ENCODE measurements at regions of chr1 and their contacts with region 1.

Region 1: DNA sequence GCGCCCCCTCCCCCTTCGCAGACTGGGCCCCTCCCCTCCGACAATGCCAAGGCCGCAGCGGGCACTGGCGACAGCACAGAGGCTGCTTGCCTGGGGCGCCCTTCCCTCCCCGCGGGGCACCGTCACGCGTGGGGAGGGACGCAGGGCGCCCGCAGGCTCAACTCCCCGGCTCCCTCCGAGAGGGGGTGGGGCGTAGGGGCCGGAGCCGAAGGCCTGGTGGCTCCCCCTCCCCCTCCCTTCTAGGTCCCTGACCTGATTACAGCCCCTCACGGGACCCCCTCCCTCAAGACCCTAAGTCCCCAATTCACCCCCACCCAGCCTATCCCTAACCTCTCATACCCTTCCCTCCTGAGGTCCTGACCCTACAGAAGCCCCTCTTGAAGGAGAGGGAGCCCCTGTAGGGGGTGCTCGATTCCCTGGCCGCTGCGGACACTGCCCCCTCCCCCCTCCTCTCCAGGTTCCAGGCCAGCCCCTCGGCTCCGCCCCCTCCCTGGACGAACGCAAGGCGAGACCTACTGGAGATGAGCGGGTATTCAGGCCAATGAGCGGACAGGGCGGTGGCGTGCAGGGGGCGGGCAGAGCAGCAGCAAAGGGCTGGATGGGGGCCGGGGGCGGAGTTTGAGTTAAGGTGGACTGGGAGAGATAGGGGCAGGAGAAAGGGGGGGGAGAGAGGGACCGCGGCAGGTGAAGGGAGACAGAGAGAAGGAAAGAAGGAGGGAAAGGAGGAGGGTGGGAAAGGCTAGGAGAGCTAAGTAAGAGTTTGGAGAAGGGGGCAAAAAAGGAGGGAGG is 733 bp upstream of the ZBTB7B start:
- DNase-seq: peak; percentile 100

Region 2: DNA sequence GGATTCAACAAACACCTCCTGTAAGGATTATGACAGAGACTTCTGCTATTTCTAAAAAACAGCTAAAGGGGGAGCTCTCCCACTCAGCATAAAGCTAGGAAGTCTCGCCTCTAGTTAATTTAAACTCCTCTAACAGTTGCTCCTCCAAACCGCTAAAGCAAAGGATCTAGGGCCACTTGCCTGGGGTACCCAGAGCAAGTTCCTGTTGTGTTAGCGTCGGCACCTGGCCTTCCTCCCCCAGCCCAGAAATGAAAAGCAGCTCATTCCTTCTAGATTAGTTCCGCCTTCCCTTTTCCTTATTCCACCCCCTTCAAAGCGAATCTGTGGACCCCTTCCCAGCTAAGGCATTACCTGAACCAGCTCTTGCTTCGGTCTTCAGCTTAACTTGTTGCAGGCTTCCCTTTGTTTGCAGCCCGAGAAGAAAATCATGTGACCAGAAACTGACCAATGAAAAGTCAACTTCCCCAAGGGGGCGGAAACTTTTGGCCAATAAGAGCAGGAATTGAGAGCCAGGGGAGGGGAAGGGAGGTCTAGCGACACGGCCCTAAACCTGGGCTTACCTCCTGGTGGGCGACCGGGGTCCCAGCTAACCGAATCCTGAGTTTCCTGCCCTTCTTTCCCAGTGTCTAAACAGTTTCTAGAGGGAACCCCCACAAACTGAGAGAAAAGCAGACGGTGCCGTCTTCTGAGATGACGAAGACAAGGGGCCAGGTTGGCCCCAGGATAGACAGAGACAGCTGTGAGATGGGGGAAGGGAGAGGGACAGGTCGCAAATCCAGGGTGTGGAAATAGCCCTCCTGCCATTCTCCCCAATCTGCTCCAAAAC is 45.9 kb before region 1 on chr1 and contains the start of gene PBXIP1:
- intact Hi-C with region 1: no loop called
- DNase-seq: peak; percentile 27 to 92 (median 77)

Region 3: GRCh38 chr1:154969860-154970452 is 31.9 kb before region 1 on chr1:
- intact Hi-C with region 1: loop called (anchors 5 kb)
- DNase-seq: peak in 1 of 42 donors; percentile 23

Region 4: DNA sequence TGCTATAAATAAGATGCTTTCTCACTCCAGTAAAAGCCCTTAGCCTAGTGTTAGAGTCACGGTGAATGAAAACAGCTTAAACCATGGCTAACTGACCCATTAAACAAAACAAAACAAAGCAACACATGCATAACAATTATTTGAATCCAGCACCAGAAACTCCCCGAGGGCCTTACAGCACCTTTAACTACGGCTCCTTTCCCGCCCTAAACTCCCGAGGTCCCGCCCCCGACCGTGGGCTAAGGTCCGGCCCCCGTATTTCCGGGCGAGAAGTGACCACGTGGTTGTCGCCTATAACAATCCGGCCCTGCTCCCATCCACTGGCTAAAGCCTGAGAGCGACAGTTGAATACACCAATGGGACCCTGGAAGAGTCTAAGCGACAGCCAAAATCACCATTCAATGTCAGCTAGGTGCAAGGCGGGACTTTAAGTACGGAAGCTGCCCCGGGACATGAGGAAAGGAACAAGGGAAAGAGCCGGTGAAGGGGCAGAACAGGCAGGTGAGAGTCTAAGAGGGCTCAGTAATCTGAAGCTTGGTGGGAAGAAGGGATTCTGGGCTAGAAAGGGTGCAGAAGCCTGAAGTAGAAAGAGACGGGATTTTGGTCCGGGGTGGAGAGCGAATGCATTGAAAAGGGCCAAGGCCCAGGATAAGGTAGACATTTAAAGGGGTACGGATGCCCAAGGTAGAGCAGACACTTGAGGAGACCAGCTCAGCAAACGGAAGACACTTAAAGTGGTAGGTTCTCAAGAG is 18.8 kb before region 1 on chr1 and contains the start of gene FLAD1:
- intact Hi-C with region 1: loop called (anchors 2 kb)
- DNase-seq: peak; percentile 92 to 99 (median 97)

Region 5: GRCh38 chr1:155063550-155064110 is 61.8 kb after region 1 on chr1 and contains the start of gene EFNA4:
- intact Hi-C with region 1: loop called (anchors 10 kb)
- DNase-seq: peak in 39 of 42 donors; percentile 35 to 89 (median 74)

Region 6: DNA sequence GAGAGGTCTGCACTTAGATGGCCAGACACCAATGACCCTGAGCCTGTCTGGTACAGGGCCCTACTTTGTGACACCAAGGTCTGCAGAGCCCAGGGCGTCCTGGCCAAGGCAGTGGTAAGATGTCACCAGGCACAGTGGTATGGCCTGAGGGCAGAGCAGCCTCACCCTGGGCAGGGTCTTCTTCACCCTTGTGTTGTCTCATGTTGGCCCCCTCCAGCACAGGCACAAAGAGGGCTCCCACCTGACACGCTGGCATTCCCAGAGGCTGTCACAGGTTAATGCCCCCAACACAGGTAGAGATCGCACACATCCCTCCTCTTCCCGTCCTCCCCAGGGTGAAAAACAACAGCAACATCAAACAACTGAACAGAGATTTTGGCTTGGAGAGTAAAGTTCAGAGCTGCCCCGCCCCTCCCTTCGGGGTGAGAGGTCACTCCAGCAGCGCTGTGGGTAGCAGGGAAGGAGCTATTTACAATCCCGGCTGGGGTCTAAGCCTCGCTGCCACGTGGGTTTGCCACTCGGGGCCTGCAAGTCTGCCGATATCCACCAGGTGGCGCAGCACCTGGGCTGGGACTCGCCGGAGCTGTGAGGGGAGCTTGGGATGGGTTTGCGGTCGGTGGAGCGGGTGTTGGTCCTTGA is 89.3 kb after region 1 on chr1:
- intact Hi-C with region 1: no loop called
- DNase-seq: peak; percentile 63 to 94 (median 86)